Activated naive CD4-positive, alpha-beta T cell treated with anti-CD3 and anti-CD28 coated beads for 36 hours (primary cell): ENCODE measurements at regions of chr9 and their contacts with region 1.

Region 1: GRCh38 chr9:108850293-108850897 is 5.4 kb downstream of the ACTL7B start:
- DNase-seq: no peak
- H3K4me3 Mint-ChIP-seq: no peak overlapping the region
- H3K27ac Mint-ChIP-seq: no peak overlapping the region
- H3K4me1 Mint-ChIP-seq: no peaks in the 10 kb centered on the region
- H3K27me3 Mint-ChIP-seq: no peaks in the 10 kb centered on the region

Region 2: DNA sequence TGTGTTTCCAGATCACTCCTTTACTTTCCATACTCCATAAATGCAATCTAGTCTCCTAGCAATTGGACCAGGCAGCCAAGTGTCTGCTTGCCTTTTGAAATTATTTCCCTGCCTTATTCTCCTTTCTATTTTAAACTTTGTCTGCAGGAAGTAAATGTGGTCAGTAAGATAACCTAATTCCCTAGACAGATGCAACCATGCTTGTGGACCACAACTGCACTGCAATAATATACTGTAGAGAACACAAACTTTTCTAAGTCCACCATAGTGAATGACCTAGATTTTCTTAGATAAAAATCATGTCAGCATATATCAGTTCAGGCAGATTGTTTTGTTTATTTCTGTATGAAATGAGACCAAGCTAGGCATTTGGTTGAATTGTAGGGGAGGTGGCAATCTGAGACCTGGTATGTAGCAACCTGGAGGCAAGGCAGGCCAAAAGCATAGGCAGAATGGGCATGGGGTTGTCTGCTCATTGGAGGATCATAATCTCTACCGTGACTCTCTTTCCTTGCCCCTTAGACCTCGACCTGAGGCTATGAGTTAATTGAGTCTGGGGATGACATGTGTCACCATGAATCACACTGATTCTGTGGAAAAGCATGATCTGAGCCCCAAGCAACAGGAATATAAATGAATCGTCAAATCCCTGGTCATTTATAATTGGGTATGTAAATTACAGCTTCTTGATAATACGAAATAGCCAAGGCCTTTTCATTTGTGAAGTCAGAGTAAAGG is 15.3 kb before region 1 on chr9:
- CTCF ChIA-PET with region 1: no interaction called
- intact Hi-C with region 1: no loop called
- DNase-seq: no peak
- H3K4me3 Mint-ChIP-seq: no peak overlapping the region
- H3K27ac Mint-ChIP-seq: no peak overlapping the region
- H3K4me1 Mint-ChIP-seq: no peaks in the 10 kb centered on the region
- H3K27me3 Mint-ChIP-seq: no peaks in the 10 kb centered on the region

Region 3: DNA sequence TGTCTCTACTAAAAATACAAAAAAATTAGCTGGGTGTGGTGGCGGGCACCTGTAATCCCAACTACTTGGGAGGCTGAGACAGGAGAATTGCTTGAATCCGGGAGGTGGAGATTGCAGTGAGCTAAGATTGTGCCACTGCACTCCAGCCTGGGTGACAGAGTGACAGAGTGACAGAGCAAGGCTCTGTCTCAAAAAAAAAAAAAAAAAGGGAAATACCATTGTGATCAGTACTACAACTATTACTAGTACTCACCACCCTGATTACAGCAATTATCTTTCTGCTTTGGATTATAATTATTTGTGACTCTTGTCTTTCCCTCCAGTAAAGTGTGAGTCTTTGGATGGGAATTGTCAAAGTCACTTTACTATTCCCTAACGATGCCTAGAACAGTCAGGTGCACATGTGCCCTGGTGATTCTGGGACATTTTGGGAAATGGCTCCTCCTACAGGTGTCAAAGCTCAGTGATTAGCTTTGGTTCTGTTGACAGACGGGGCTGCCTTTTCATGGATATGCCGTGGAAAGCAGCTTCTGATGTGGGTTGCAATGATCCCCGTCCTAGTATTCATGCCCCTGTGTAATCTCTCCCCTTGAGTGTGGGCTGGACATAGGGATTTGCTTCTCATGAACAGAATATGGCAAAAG is 348.5 kb after region 1 on chr9:
- CTCF ChIA-PET with region 1: interaction called, 4 read pairs
- intact Hi-C with region 1: loop called (anchors 1 kb)
- DNase-seq: peak; percentile 26
- H3K4me3 Mint-ChIP-seq: no peak overlapping the region
- H3K27ac Mint-ChIP-seq: no peak overlapping the region
- H3K4me1 Mint-ChIP-seq: peaks cover 2% of the 10 kb centered on the region
- H3K27me3 Mint-ChIP-seq: peaks cover 3% of the 10 kb centered on the region